Body of pancreas (tissue), 4 donors: ENCODE measurements at regions of chr17 and their contacts with region 1.

Region 1: GRCh38 chr17:68539548-68540467 is 27.6 kb downstream of the PRKAR1A start:
- DNase-seq: peak in 1 of 4 donors; percentile 15
- ATAC-seq: no peak
- H3K4me3 ChIP-seq: no peak overlapping the region
- H3K27ac ChIP-seq: no peak overlapping the region
- H3K4me1 ChIP-seq: no peaks in the 10 kb centered on the region
- H3K27me3 ChIP-seq: no peaks in the 10 kb centered on the region
- CTCF ChIP-seq: peak in 1 of 7 experiments; percentile 2
- POLR2A ChIP-seq: no peak

Region 2: GRCh38 chr17:68759343-68760132 is 219.7 kb after region 1 on chr17:
- intact Hi-C with region 1: loop called (anchors 10 kb)
- DNase-seq: peak; percentile 89 to 94 (median 92)
- ATAC-seq: peak; percentile 100
- H3K4me3 ChIP-seq: no peak overlapping the region
- H3K27ac ChIP-seq: peak overlapping the region; percentile 69 to 74 (median 70)
- H3K4me1 ChIP-seq: peaks cover 9% of the 10 kb centered on the region
- H3K27me3 ChIP-seq: no peaks in the 10 kb centered on the region
- CTCF ChIP-seq: peak; percentile 70 to 96 (median 95)
- POLR2A ChIP-seq: peak in 1 of 3 donors; percentile 16